ENCODE measurements at regions of chr11 and their contacts with region 1.

Region 1: DNA sequence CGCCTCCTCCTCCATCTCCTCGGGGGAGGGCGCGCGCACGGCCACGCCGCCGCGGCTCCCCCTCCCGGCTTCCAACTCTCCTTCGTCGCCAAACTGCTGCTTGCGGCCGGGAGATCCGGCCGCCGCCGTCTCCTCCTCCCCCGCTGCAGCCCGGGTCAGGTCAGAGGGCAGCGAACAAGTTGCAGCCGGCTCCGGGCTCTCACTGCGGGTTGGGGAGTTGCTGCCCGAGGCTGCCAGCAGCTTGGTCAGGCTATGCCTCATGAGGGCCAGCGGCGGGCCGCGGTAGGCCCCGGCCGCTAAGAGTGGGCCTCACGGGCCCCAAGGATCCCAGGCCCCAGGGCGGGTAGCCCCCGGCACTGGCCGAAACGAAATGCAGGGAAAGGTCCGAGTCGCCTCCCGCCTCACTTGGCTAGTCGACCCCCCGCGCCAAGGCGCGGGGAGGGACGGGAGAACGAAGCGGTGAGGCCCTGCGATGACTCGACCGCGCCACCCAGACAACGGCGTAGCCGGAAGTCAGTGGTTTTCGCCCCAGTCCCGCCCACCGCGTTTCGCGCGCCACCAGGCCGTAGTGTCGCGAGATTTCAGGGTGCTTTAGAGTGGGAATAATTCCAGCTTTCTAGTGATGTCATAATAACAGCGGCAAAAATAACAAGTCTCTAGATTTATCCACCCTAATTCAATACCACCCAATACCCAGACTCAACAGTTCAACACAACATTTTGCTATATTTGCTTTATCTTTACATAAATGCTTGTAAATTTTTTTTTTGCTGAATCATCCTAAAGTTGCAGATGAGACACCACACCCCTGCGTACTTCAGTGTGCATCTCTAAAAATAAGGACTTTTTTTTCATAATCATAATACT is at the start of gene CREBZF:
- DNase-seq: peak; percentile 94
- H3K4me3 Mint-ChIP-seq: peak within 1 kb of the TSS; percentile 100
- H3K27ac Mint-ChIP-seq: peak within 1 kb of the TSS; percentile 100
- H3K4me1 Mint-ChIP-seq: peaks cover 33% of the 10 kb centered on the region
- H3K27me3 Mint-ChIP-seq: no peaks in the 10 kb centered on the region
- total RNA-seq, gene CREBZF: 55.5 to 57.2 TPM

Region 2: DNA sequence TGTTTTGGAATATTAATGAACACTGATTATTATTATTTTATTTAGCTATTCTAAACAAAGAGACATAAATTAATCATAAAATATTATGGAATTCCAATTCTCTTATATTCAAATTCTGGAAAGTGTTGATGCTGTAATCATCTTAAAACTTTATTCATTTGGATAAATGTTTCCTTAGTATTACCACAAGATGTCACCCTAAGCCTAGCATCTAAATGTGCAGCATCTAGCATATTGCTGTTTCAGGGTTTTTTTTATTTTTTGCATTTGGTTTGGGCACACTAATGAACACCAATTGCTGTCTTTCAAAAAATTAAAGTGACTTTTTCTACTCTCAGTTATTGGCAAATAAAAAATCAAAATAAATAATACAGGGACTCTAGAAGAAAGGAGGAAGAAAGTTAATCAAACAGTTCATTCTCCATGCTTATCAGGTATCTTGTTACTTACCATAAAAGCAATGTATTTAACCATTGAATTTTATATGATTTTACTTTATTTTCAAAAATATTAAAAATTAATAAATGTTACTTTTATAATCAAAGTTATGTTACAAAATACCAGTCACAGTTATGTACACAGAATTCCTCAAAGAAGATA is 69.5 kb before region 1 on chr11:
- CTCF ChIA-PET with region 1: no interaction called
- POLR2A ChIA-PET with region 1: no interaction called
- DNase-seq: peak; percentile 27
- H3K4me3 Mint-ChIP-seq: no peak overlapping the region
- H3K27ac Mint-ChIP-seq: no peak overlapping the region
- H3K4me1 Mint-ChIP-seq: no peaks in the 10 kb centered on the region
- H3K27me3 Mint-ChIP-seq: peaks cover 2% of the 10 kb centered on the region

Region 3: DNA sequence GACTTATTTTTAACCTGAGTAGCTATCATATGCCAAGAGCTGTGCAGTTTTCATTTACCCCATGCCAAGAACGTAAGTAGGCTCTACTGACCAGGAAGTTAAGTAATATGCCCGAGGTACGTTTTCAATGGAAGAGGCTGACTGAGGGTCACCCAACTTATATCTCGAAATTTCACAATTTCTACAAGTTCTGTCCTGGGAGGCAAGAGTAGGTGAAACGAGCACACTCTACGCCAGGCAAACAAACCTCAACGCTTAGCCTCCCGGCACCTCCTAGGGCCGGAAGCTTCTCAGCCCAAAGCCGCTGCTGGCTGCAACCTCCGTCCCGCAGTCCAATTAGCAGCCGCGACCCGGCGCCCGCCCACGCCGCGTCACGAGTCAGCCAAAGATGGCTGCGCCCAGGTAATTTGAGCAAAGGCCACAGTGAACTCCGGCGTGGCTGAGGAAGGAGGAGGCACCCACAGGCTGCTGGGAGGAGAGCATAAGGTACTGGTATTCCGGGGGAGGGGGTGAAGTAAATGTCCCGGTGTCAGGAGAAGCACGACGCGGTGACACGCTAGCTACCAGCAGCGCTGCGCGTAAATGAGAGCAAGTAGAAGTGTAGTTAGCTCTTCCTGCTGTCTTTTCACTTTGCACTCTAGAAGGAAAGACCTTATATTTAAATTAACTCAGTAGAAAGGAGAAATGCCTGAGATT is 17.1 kb before region 1 on chr11 and contains the start of gene TMEM126A:
- CTCF ChIA-PET with region 1: interaction called, 16 read pairs
- POLR2A ChIA-PET with region 1: no interaction called
- DNase-seq: peak; percentile 92
- H3K4me3 Mint-ChIP-seq: peak within 1 kb of the TSS; percentile 99
- H3K27ac Mint-ChIP-seq: peak within 1 kb of the TSS; percentile 98
- H3K4me1 Mint-ChIP-seq: peaks cover 40% of the 10 kb centered on the region
- H3K27me3 Mint-ChIP-seq: peaks cover 24% of the 10 kb centered on the region
- total RNA-seq, gene TMEM126A: 29.3 to 30.7 TPM

Region 4: DNA sequence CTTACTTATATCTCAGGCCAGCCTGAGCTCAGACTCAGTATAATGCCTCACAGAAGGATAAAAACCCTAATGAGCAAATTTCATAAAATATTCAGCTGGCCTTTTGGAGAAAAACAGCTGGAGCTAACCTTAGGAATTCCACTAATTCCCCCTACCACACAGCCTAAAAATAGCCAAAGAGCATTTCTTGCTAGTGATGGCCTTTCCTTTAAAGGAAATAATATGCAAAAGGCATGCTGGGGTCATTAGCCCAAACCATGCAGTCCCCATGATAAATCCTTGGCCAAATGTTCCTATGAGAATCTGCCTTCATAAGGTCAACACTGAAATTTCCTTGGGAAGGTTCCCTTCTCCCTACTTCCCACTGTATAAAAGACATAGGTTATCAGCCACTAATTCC is 107.8 kb after region 1 on chr11:
- CTCF ChIA-PET with region 1: no interaction called
- POLR2A ChIA-PET with region 1: no interaction called
- DNase-seq: no peak
- H3K4me3 Mint-ChIP-seq: no peak overlapping the region
- H3K27ac Mint-ChIP-seq: no peak overlapping the region
- H3K4me1 Mint-ChIP-seq: peaks cover 27% of the 10 kb centered on the region
- H3K27me3 Mint-ChIP-seq: no peaks in the 10 kb centered on the region

Region 5: GRCh38 chr11:85902353-85902752 is 237.5 kb after region 1 on chr11:
- CTCF ChIA-PET with region 1: no interaction called
- POLR2A ChIA-PET with region 1: no interaction called
- DNase-seq: no peak
- H3K4me3 Mint-ChIP-seq: no peak overlapping the region
- H3K27ac Mint-ChIP-seq: no peak overlapping the region
- H3K4me1 Mint-ChIP-seq: no peaks in the 10 kb centered on the region
- H3K27me3 Mint-ChIP-seq: peaks cover 4% of the 10 kb centered on the region

Measured in activated CD4-positive, alpha-beta T cell treated with anti-CD3 and anti-CD28 coated beads, Interleukin-2, amount 10 ng/mL, durations not matched to agents 7 days and 5 days (primary cell).